Breast epithelium (tissue), 4 donors: ENCODE measurements at regions of chr2 and their contacts with region 1.

Region 1: DNA sequence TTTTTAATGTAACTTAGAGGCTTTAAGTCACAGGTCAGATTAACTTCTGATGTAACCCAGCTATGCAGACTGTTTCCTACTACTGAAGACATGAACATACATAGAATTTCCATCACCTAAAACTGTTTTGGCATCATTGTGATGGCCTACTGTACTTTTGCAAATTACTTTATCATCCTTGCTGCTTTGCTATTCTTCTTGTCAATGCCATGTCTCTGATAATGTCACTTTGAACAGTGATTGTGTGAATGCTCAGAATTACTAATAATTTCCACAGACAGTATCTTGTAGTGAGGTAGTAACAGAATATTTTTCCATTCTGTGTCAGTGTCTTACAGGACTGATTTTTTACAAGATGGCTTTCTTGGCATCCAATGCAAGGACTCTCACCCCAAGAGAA is 663.5 kb downstream of the DPP10 start:
- DNase-seq: no peak
- H3K4me3 ChIP-seq: no peak overlapping the region
- H3K27ac ChIP-seq: no peak overlapping the region
- H3K4me1 ChIP-seq: no peaks in the 10 kb centered on the region
- H3K27me3 ChIP-seq: no peaks in the 10 kb centered on the region
- CTCF ChIP-seq: no peak
- POLR2A ChIP-seq: no peak

Region 2: DNA sequence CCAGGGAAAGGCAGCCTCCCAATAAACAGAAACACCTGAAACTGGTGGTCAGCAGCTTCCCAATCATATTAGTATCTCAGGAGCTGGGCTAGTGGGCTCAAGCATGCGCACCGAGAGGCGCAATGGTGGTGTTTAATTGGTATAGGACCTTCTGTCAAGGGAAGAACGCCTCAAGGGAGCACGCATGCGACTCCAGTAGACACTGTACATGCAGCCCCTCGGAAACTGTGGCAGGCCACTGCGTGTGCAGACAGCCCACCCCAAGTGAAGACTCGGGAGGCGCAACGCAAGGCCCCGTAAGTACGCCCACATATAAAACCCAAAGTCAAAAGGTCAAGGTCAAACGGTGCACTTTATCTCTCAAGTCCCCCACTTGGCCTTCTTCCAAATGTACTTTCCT is 742.2 kb after region 1 on chr2:
- intact Hi-C with region 1: loop called (anchors 5 kb)
- DNase-seq: no peak
- H3K4me3 ChIP-seq: no peak overlapping the region
- H3K27ac ChIP-seq: no peak overlapping the region
- H3K4me1 ChIP-seq: no peaks in the 10 kb centered on the region
- H3K27me3 ChIP-seq: no peaks in the 10 kb centered on the region
- CTCF ChIP-seq: no peak
- POLR2A ChIP-seq: no peak